BJ (cell line): ENCODE measurements at regions of chr11 and their contacts with region 1.

Region 1: DNA sequence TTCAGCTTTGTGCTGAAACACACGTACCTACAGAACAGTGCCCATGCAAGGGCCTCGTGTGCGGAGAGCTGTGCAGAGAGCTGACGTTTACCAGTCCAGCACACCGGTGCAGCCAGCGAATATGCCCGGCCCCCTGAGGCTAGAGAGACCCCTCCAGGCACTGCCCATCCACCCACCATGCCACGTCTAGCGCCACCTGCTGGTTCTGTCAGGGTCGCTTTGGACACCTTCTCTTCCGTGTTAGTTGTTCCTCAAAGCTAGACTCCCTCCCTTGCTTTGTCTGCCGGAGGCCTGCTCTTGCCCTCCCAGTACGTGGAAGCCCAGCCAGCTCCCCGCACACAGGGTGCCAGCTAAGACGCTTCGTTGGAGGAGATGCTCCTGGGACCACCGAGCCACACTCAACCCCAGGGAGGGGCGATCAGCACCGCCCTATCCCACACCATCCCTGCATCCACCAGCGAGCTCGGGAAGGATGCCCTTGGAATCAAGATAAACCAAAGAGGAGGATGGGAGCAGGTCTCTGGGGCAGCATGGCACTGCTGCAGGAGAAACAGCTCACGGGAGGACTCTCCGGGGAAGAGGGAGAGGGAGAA is 43.4 kb downstream of the CPT1A start:
- DNase-seq: no peak
- H3K4me3 ChIP-seq: no peak overlapping the region
- H3K27me3 ChIP-seq: no peaks in the 10 kb centered on the region
- CTCF ChIP-seq: peak; percentile 66

Region 2: DNA sequence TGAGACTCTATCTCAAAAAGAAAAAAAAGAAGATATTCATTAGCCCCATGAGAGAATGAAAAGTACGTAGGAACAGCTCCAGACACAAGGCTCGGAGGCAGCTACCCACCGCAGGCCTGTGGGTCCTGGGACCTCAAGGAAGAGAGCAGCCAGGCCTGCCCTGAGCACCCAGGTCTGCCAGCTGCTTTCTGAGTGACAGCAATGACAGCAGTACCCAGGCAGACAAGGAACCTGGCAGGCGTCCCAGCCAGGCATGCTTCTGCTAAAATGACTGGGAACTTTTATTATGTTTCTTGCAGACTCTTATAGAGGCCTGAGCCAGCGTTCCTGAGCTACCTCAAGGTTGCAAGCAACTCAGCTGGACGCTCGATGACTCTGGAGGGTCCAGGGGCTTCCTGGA is 11.8 kb after region 1 on chr11:
- CTCF ChIA-PET with region 1: interaction called, 10 read pairs
- POLR2A ChIA-PET with region 1: interaction called, 16 read pairs
- DNase-seq: no peak
- H3K4me3 ChIP-seq: no peak overlapping the region
- H3K27me3 ChIP-seq: no peaks in the 10 kb centered on the region
- CTCF ChIP-seq: no peak